Activated naive CD8-positive, alpha-beta T cell treated with anti-CD3 and anti-CD28 coated beads, Interleukin-2, amount 10 ng/mL, durations not matched to agents 7 days and 5 days (primary cell): ENCODE measurements at regions of chr6 and their contacts with region 1.

Region 1: GRCh38 chr6:87714093-87714809 is 12.2 kb upstream of the AKIRIN2 start:
- DNase-seq: no peak
- ATAC-seq: peak; percentile 88
- H3K4me3 Mint-ChIP-seq: no peak overlapping the region
- H3K27ac Mint-ChIP-seq: peak overlapping the region; percentile 73
- H3K4me1 Mint-ChIP-seq: peaks cover 16% of the 10 kb centered on the region
- H3K27me3 Mint-ChIP-seq: peaks cover 2% of the 10 kb centered on the region

Region 2: GRCh38 chr6:87687296-87687695 is 27.0 kb before region 1 on chr6:
- POLR2A ChIA-PET with region 1: no interaction called
- DNase-seq: no peak
- ATAC-seq: no peak
- H3K4me3 Mint-ChIP-seq: no peak overlapping the region
- H3K27ac Mint-ChIP-seq: no peak overlapping the region
- H3K4me1 Mint-ChIP-seq: peaks cover 24% of the 10 kb centered on the region
- H3K27me3 Mint-ChIP-seq: no peaks in the 10 kb centered on the region

Region 3: DNA sequence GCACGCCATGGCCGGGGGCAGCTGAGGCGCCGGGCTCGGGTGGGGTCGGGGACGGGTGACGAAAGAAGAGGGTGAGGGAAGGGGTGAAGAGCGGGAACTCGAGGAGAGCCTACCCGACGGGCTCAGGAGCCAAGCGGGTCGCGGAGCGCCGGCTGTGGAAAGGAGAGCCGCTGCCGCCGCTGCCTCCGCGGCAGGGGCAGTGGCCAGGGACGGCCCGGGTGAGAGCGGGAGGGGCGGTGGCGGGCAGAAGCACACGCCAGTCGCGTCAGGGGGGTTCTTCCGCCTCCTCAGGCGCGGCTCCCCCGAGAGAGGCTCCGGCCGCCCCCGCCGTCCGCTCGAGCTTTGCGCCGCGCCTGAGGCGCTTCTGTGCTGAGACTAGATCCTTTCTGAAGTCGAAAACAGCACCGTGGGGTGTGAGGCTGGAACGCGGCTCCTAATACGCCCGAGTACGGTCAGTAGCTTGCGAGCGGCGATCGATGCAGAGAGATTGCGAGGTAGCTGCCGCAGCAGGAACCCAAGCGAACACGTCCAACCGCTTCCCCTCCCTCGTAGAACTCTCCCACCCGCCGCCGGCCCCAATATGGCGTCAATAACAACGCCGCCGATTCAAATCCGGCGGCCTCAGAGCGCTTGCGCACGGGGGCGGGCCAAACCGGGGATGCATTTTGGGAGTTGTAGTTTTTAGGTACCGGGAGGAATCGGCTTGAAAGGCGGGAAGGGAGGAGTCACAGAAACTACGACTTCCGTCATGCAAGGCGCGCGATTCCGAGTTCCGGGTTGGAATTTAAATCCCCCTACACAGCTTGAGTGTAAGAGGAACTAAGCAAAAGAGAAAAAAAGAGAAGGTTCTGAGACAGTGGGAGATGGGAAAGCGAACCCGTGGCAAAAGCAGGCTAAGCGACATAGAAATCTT is 12.3 kb before region 1 on chr6 and contains the start of gene AKIRIN2:
- POLR2A ChIA-PET with region 1: interaction called, 17 read pairs
- DNase-seq: peak; percentile 96
- ATAC-seq: peak; percentile 86
- H3K4me3 Mint-ChIP-seq: peak within 1 kb of the TSS; percentile 99
- H3K27ac Mint-ChIP-seq: peak within 1 kb of the TSS; percentile 98
- H3K4me1 Mint-ChIP-seq: peaks cover 22% of the 10 kb centered on the region
- H3K27me3 Mint-ChIP-seq: no peaks in the 10 kb centered on the region
- total RNA-seq, gene AKIRIN2: 45.3 to 51.8 TPM